ENCODE measurements at regions of chr14 and their contacts with region 1.

Region 1: GRCh38 chr14:39432179-39432618 is at the start of gene FBXO33:
- DNase-seq: peak; percentile 92 to 98 (median 95)
- ATAC-seq: peak; percentile 80
- H3K4me3 ChIP-seq: peak within 1 kb of the TSS; percentile 97
- H3K4me3 Mint-ChIP-seq: peak within 1 kb of the TSS; percentile 99
- H3K27ac ChIP-seq: peak within 1 kb of the TSS; percentile 96 to 100
- H3K27ac Mint-ChIP-seq: peak within 1 kb of the TSS; percentile 100
- H3K4me1 ChIP-seq: peaks cover 34% of the 10 kb centered on the region
- H3K4me1 Mint-ChIP-seq: peaks cover 42% of the 10 kb centered on the region
- H3K27me3 ChIP-seq: no peaks in the 10 kb centered on the region
- H3K27me3 Mint-ChIP-seq: no peaks in the 10 kb centered on the region
- CTCF ChIP-seq: no peak
- total RNA-seq, gene FBXO33: 106 TPM

Region 2: DNA sequence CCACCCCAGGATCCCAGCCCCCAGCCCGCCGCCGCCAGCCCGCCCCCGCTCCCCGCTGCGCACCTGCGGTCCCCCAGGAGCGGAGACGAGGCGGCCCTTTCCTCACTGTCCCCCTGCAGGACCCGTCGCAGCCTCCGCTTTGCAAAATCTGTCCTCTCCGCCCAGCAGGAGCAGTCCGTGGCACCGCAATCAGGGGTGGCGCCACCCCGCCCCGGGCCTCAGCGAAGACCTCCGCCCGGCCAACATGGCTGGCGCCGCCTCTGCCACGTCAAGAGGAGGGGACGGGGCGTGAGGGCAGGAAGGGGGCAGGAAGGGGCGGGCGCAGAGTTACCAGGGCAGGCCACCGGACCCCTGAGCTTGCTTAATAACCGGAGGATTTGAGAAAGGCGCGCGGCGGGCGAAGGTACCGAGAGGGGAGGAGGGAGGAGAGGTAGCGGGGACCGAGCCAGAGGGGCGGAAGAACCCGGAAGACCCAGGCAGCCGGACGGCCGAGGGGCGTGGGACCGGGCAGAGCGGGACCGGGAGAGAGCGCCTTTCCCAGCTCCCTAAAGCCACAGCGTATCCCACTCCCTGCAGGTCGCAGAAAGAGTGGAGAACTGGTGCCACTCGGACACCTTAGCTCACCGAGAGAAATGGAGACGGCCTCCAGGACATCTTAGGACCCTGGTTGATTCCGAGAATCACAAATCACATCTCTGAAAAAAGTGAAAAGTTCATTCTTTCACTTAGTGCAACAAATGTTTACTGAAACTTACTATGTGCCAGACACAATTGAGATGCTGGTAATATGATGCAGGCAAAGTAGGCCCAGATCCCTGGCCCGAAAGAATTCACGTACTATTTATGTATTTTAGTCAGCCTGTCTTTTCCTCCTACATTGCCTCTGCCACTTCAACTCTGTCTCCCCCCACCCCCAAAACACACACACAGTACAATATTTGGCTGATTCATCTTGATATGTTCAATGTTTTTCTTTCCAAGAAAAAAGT is 328.9 kb before region 1 on chr14 and contains the start of gene SEC23A:
- CTCF ChIA-PET with region 1: interaction called, 4 read pairs
- POLR2A ChIA-PET with region 1: interaction called, 25 read pairs
- intact Hi-C with region 1: loop called (anchors 1 to 5 kb)
- DNase-seq: peak; percentile 57 to 89 (median 82)
- ATAC-seq: peak; percentile 94
- H3K4me3 ChIP-seq: peak within 1 kb of the TSS; percentile 92 to 94
- H3K4me3 Mint-ChIP-seq: peak within 1 kb of the TSS; percentile 95
- H3K27ac ChIP-seq: peak within 1 kb of the TSS; percentile 90 to 93
- H3K27ac Mint-ChIP-seq: peak within 1 kb of the TSS; percentile 98
- H3K4me1 ChIP-seq: peaks cover 23% of the 10 kb centered on the region
- H3K4me1 Mint-ChIP-seq: peaks cover 52% of the 10 kb centered on the region
- H3K27me3 ChIP-seq: no peaks in the 10 kb centered on the region
- H3K27me3 Mint-ChIP-seq: no peaks in the 10 kb centered on the region
- CTCF ChIP-seq: no peak
- total RNA-seq, gene SEC23A: 61.0 to 62.0 TPM

Region 3: DNA sequence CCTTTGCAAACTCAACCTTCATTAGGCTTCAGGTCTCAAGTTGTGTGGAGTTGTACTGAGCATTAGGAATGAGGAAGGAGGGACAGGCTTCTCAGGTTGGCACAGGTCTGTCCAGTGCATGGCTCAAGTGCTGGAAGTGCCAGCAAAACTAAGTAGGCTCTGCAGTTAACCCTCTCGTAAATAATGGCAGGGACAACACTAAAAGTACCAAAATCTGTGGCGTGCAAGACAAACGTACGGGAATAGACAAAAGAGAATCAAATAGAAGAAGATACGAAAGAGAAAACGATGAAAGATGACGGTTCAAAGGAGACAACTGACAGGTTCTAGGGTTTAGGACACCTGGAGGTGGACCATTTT is 262.7 kb before region 1 on chr14:
- CTCF ChIA-PET with region 1: interaction called, 3 read pairs
- POLR2A ChIA-PET with region 1: interaction called, 38 read pairs
- intact Hi-C with region 1: loop called in 1 of 2 experiments (anchors 1 kb)
- DNase-seq: no peak
- ATAC-seq: no peak
- H3K4me3 ChIP-seq: peak overlapping the region; percentile 78 to 97
- H3K4me3 Mint-ChIP-seq: peak overlapping the region; percentile 87
- H3K27ac ChIP-seq: peak overlapping the region; percentile 84 to 94
- H3K27ac Mint-ChIP-seq: peak overlapping the region; percentile 99
- H3K4me1 ChIP-seq: peaks cover 34% of the 10 kb centered on the region
- H3K4me1 Mint-ChIP-seq: peaks cover 52% of the 10 kb centered on the region
- H3K27me3 ChIP-seq: no peaks in the 10 kb centered on the region
- H3K27me3 Mint-ChIP-seq: no peaks in the 10 kb centered on the region
- CTCF ChIP-seq: no peak

Region 4: DNA sequence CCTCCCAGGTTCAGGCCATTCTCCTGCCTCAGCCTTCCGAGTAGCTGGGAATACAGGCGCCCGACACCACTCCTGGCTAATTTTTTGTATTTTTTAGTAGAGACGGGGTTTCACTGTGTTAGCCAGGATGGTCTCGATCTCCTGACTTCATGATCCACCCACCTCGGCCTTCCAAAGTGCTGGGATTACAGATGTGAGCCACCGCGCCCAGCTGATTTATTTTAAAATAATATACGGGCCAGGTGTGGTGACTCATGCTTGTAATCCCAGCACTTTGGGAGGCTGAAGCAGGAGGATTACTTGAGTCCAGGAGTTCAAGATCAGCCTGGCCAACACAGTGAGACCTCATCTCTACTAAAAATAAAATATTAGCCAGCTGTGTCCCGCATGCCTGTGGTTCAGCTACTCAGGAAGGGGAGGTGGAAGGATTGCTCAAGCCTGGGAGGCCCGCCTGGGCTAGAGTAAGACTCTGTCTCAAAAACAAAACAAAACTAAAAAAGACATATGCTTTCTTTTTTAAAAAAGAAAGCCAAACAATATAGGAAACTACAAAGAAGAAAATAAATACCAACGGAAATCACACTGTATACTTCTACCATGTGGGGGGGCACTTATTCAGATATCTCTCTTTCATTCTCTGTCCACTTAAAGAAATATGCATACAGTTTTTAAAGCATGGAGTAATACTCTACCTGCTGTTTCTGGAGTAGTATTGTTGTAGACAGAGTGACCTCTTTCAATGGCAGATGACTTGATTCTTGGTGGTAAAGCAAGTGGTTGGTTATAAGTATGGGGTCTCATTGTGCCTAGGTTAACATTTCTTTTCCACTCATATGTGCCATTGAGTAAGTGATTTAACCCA is 199.4 kb before region 1 on chr14:
- CTCF ChIA-PET with region 1: interaction called, 5 read pairs
- POLR2A ChIA-PET with region 1: interaction called, 16 read pairs
- intact Hi-C with region 1: loop called (anchors 1 to 5 kb)
- DNase-seq: peak in 2 of 9 experiments; percentile 34 to 61
- ATAC-seq: no peak
- H3K4me3 ChIP-seq: no peak overlapping the region
- H3K4me3 Mint-ChIP-seq: no peak overlapping the region
- H3K27ac ChIP-seq: peak overlapping the region in 1 of 2 experiments; percentile 60
- H3K27ac Mint-ChIP-seq: peak overlapping the region; percentile 35
- H3K4me1 ChIP-seq: peaks cover 21% of the 10 kb centered on the region
- H3K4me1 Mint-ChIP-seq: peaks cover 39% of the 10 kb centered on the region
- H3K27me3 ChIP-seq: no peaks in the 10 kb centered on the region
- H3K27me3 Mint-ChIP-seq: no peaks in the 10 kb centered on the region
- CTCF ChIP-seq: no peak

Region 5: DNA sequence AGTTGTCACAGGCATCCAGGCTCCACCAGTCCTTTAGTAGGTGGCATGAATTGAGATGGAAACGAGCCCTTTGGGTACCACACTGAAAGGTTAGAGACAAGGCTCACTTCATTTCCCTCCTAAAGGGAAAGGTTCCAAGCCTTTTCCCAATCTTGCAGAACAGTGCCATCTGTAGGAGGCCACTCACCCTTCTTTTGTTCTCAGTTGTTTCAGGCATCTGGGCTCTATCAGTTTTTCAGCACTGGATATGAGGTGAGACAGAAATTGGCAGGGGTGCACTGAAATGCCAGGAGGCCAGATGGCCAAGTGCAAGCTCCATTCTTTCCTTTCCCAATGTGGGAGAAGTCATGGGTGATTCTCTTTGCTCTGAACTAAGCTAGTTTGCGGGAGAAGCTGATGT is 15.2 kb before region 1 on chr14:
- CTCF ChIA-PET with region 1: interaction called, 5 read pairs
- POLR2A ChIA-PET with region 1: interaction called, 17 read pairs
- intact Hi-C with region 1: loop called in 1 of 2 experiments (anchors 2 kb)
- DNase-seq: no peak
- ATAC-seq: no peak
- H3K4me3 ChIP-seq: no peak overlapping the region
- H3K4me3 Mint-ChIP-seq: no peak overlapping the region
- H3K27ac ChIP-seq: no peak overlapping the region
- H3K27ac Mint-ChIP-seq: no peak overlapping the region
- H3K4me1 ChIP-seq: peaks cover 2% of the 10 kb centered on the region
- H3K4me1 Mint-ChIP-seq: peaks cover 48% of the 10 kb centered on the region
- H3K27me3 ChIP-seq: no peaks in the 10 kb centered on the region
- H3K27me3 Mint-ChIP-seq: no peaks in the 10 kb centered on the region
- CTCF ChIP-seq: no peak